ENCODE measurements at regions of chr10 and their contacts with region 1.

Region 1: GRCh38 chr10:72215652-72216549 is at the starts of genes ANAPC16 and ASCC1:
- DNase-seq: peak; percentile 90 to 99 (median 95)
- H3K4me3 ChIP-seq: peak within 1 kb of the TSS; percentile 99
- H3K4me3 Mint-ChIP-seq: peak within 1 kb of the TSS; percentile 94 to 100 (median 99)
- H3K27ac ChIP-seq: peak within 1 kb of the TSS; percentile 91
- H3K27ac Mint-ChIP-seq: peak within 1 kb of the TSS; percentile 92 to 100 (median 99)
- H3K4me1 ChIP-seq: peaks cover 47% of the 10 kb centered on the region
- H3K4me1 Mint-ChIP-seq: peaks cover 38 to 62% (median 53%) of the 10 kb centered on the region in 3 donors
- H3K27me3 ChIP-seq: no peaks in the 10 kb centered on the region
- H3K27me3 Mint-ChIP-seq: peaks cover 0 to 3% of the 10 kb centered on the region in 2 donors
- total RNA-seq, gene ANAPC16: 68.1 to 78.3 TPM
- total RNA-seq, gene ASCC1: 36.3 to 43.2 TPM

Region 2: GRCh38 chr10:72088889-72089575 is 126.9 kb before region 1 on chr10:
- CTCF ChIA-PET with region 1: interaction called, 9 read pairs
- POLR2A ChIA-PET with region 1: interaction called, 14 read pairs
- DNase-seq: peak in 3 of 5 donors; percentile 39 to 89 (median 69)
- H3K4me3 ChIP-seq: peak overlapping the region; percentile 88
- H3K4me3 Mint-ChIP-seq: peak overlapping the region; percentile 96 to 100 (median 100)
- H3K27ac ChIP-seq: peak overlapping the region; percentile 86
- H3K27ac Mint-ChIP-seq: peak overlapping the region; percentile 96 to 100 (median 100)
- H3K4me1 ChIP-seq: peaks cover 47% of the 10 kb centered on the region
- H3K4me1 Mint-ChIP-seq: peaks cover 48 to 53% (median 51%) of the 10 kb centered on the region in 3 donors
- H3K27me3 ChIP-seq: no peaks in the 10 kb centered on the region
- H3K27me3 Mint-ChIP-seq: peaks cover 0 to 11% of the 10 kb centered on the region in 2 donors

Region 3: GRCh38 chr10:72186258-72186981 is 29.5 kb before region 1 on chr10:
- CTCF ChIA-PET with region 1: no interaction called
- POLR2A ChIA-PET with region 1: interaction called, 10 read pairs
- DNase-seq: no peak
- H3K4me3 ChIP-seq: no peak overlapping the region
- H3K4me3 Mint-ChIP-seq: no peak overlapping the region
- H3K27ac ChIP-seq: no peak overlapping the region
- H3K27ac Mint-ChIP-seq: peak overlapping the region in 2 of 8 donors; percentile 8 to 24
- H3K4me1 ChIP-seq: no peaks in the 10 kb centered on the region
- H3K4me1 Mint-ChIP-seq: peaks cover 0 to 7% (median 4%) of the 10 kb centered on the region in 3 donors
- H3K27me3 ChIP-seq: no peaks in the 10 kb centered on the region
- H3K27me3 Mint-ChIP-seq: no peaks in the 10 kb centered on the region

Region 4: DNA sequence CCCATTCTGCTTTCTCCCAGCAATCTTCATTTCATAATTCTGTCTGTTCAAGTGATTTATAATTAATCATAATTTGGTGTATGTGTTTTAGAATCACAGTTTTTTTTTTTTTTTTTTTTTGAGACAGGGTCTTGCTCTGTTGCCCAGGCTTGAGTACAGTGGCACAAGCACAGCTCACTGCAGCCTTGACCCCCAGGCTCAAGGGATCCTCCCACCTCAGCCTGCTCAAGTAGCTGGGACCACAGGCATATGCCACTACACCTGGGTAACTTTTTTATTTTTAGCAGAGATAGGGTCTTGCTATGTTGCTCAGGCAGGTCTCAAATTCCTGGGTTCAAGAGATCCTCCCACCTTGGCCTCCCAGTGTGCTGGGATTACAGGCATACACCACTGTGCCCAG is 787.9 kb after region 1 on chr10:
- CTCF ChIA-PET with region 1: no interaction called
- POLR2A ChIA-PET with region 1: no interaction called
- DNase-seq: no peak
- H3K4me3 ChIP-seq: no peak overlapping the region
- H3K4me3 Mint-ChIP-seq: no peak overlapping the region
- H3K27ac ChIP-seq: no peak overlapping the region
- H3K27ac Mint-ChIP-seq: no peak overlapping the region
- H3K4me1 ChIP-seq: no peaks in the 10 kb centered on the region
- H3K4me1 Mint-ChIP-seq: no peaks in the 10 kb centered on the region
- H3K27me3 ChIP-seq: no peaks in the 10 kb centered on the region
- H3K27me3 Mint-ChIP-seq: no peaks in the 10 kb centered on the region